ENCODE measurements at regions of chr7 and their contacts with region 1.

Region 1: DNA sequence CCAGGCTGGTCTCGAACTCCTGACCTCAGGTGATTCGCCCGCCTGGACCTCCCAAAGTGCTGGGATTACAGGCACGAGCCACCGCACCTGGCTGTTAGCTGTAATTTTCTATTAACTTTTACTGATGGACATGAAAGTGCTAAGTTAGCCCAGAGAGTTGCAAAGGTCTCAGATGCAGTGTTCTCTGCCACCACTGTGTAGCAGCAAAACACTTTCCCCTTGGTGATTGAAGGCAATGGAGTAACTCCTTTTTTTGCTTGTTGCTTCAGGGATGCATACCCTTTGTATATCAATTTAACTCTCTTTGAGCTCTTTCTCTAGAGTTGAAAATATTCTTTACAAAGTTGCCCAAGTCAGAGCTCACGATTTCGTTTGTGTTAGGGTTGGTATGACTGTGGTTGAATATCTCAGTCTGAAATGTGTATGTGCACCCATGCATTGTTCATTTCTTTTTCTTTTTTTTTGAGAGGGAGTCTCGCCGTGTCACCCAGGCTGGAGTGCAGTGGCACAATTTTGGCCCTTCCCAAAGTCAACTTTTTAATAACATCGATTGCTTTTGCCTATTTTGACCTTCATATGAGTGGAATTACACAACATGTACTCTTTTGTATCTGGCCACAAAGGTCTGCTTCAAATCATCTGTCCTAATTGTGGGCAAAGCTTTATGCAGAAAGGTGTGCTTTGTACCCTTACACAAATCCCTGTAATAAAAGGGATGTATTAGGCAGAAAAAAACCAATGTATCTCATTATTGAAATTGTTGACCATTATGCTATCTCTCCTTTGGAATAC is 52.6 kb downstream of the GTF2I start:
- DNase-seq: peak; percentile 34
- H3K4me3 ChIP-seq: no peak overlapping the region
- H3K27ac ChIP-seq: no peak overlapping the region
- H3K4me1 ChIP-seq: no peaks in the 10 kb centered on the region
- CTCF ChIP-seq: peak; percentile 54

Region 2: GRCh38 chr7:74068393-74069085 is 641.5 kb before region 1 on chr7:
- CTCF ChIA-PET with region 1: no interaction called
- POLR2A ChIA-PET with region 1: no interaction called
- intact Hi-C with region 1: no loop called
- DNase-seq: no peak
- H3K4me3 ChIP-seq: no peak overlapping the region
- H3K27ac ChIP-seq: no peak overlapping the region
- H3K4me1 ChIP-seq: peaks cover 12% of the 10 kb centered on the region
- CTCF ChIP-seq: no peak

Region 3: GRCh38 chr7:74612015-74612829 is 97.9 kb before region 1 on chr7:
- CTCF ChIA-PET with region 1: no interaction called
- POLR2A ChIA-PET with region 1: no interaction called
- intact Hi-C with region 1: loop called (anchors 10 kb)
- DNase-seq: no peak
- H3K4me3 ChIP-seq: no peak overlapping the region
- H3K27ac ChIP-seq: no peak overlapping the region
- H3K4me1 ChIP-seq: peaks cover 16% of the 10 kb centered on the region
- CTCF ChIP-seq: no peak

Region 4: GRCh38 chr7:74637745-74638144 is 72.3 kb before region 1 on chr7:
- CTCF ChIA-PET with region 1: no interaction called
- POLR2A ChIA-PET with region 1: no interaction called
- intact Hi-C with region 1: no loop called
- DNase-seq: no peak
- H3K4me3 ChIP-seq: no peak overlapping the region
- H3K27ac ChIP-seq: no peak overlapping the region
- H3K4me1 ChIP-seq: no peaks in the 10 kb centered on the region
- CTCF ChIP-seq: no peak

Region 5: GRCh38 chr7:74665296-74665938 is 44.7 kb before region 1 on chr7:
- CTCF ChIA-PET with region 1: no interaction called
- POLR2A ChIA-PET with region 1: no interaction called
- intact Hi-C with region 1: loop called (anchors 10 kb)
- DNase-seq: no peak
- H3K4me3 ChIP-seq: no peak overlapping the region
- H3K27ac ChIP-seq: no peak overlapping the region
- H3K4me1 ChIP-seq: peaks cover 37% of the 10 kb centered on the region
- CTCF ChIP-seq: no peak

Measured in OCI-LY7 (cell line).